Esophagus squamous epithelium (tissue), 5 donors: ENCODE measurements at regions of chr2 and their contacts with region 1.

Region 1: DNA sequence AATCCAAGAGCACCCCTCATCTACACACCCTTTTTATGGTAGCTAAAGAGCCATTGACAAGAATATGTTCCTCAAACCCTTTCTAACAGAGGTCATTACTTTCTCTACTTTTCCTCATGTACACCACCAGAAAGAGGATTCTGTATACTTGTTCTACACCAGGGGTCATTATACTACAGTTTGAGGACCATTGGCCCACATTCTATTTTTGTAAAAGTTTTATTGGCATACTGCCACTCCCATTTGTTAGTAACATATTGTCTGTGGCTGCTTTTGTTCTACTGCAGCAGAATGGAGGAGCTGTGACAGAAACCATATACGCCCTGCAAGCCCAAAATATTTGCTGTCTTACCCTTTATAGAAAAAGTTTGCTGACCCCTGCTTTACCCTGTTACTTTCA is 14.3 kb downstream of the HTR2B start:
- DNase-seq: no peak
- H3K4me3 ChIP-seq: no peak overlapping the region
- H3K27ac ChIP-seq: no peak overlapping the region
- H3K4me1 ChIP-seq: peaks cover 0 to 11% (median 0%) of the 10 kb centered on the region in 3 donors
- H3K27me3 ChIP-seq: no peaks in the 10 kb centered on the region
- CTCF ChIP-seq: peak in 1 of 6 experiments; percentile 16
- POLR2A ChIP-seq: no peak

Region 2: GRCh38 chr2:230814616-230815015 is 295.9 kb before region 1 on chr2:
- intact Hi-C with region 1: no loop called
- DNase-seq: no peak
- H3K4me3 ChIP-seq: no peak overlapping the region
- H3K27ac ChIP-seq: no peak overlapping the region
- H3K4me1 ChIP-seq: no peaks in the 10 kb centered on the region
- H3K27me3 ChIP-seq: no peaks in the 10 kb centered on the region
- CTCF ChIP-seq: peak in 2 of 6 experiments; percentile 7 to 34
- POLR2A ChIP-seq: no peak

Region 3: GRCh38 chr2:231000211-231000904 is 110.2 kb before region 1 on chr2:
- intact Hi-C with region 1: no loop called
- DNase-seq: no peak
- H3K4me3 ChIP-seq: no peak overlapping the region
- H3K27ac ChIP-seq: no peak overlapping the region
- H3K4me1 ChIP-seq: peaks cover 0 to 23% (median 0%) of the 10 kb centered on the region in 3 donors
- H3K27me3 ChIP-seq: peaks cover 0 to 87% (median 0%) of the 10 kb centered on the region in 4 donors
- CTCF ChIP-seq: no peak
- POLR2A ChIP-seq: no peak

Region 4: DNA sequence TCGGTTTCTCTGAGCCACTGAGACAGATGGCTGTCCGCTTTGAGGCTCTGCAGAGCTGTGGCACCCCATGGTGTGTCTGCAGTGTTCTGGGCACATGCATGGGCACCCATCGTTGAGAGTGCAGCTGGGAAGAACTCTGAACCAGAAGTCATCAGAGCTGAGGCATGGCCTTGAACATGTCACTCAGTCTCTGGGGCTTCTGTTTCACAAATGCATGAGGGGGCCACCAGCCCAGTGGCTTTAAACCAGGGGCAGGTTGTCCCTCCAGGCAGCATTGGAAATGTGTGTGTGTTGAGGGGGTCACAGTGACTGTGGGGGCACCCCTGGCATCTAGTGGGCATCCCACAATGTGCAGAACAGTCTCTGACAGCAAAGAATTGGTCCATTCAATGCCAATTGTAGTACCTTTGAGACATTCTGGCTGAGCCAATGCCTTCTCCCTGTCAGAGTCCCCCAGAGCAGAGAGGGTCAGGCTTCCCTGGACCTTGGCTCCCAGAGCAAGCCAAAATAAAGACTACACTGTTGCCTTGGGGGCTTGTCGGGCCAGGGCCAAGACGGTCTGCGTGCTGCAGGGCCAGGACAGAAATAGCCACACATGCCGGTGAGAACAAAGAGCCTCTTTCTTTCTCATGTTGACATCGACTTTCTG is 63.2 kb before region 1 on chr2:
- intact Hi-C with region 1: no loop called
- DNase-seq: no peak
- H3K4me3 ChIP-seq: no peak overlapping the region
- H3K27ac ChIP-seq: no peak overlapping the region
- H3K4me1 ChIP-seq: peaks cover 2 to 4% (median 3%) of the 10 kb centered on the region in 3 donors
- H3K27me3 ChIP-seq: peaks cover 0 to 29% (median 0%) of the 10 kb centered on the region in 4 donors
- CTCF ChIP-seq: no peak
- POLR2A ChIP-seq: no peak

Region 5: GRCh38 chr2:231057590-231057989 is 53.0 kb before region 1 on chr2:
- intact Hi-C with region 1: no loop called
- DNase-seq: no peak
- H3K4me3 ChIP-seq: peak overlapping the region; percentile 83 to 98 (median 95)
- H3K27ac ChIP-seq: peak overlapping the region in 3 of 4 donors; percentile 87 to 97 (median 95)
- H3K4me1 ChIP-seq: peaks cover 8 to 59% (median 30%) of the 10 kb centered on the region in 3 donors
- H3K27me3 ChIP-seq: no peaks in the 10 kb centered on the region
- CTCF ChIP-seq: no peak
- POLR2A ChIP-seq: no peak

Region 6: GRCh38 chr2:231191896-231192872 is 81.6 kb after region 1 on chr2:
- intact Hi-C with region 1: loop called (anchors 5 kb)
- DNase-seq: no peak
- H3K4me3 ChIP-seq: no peak overlapping the region
- H3K27ac ChIP-seq: peak overlapping the region; percentile 7 to 92 (median 82)
- H3K4me1 ChIP-seq: peaks cover 0 to 33% (median 15%) of the 10 kb centered on the region in 3 donors
- H3K27me3 ChIP-seq: peaks cover 0 to 37% (median 2%) of the 10 kb centered on the region in 4 donors
- CTCF ChIP-seq: peak in 4 of 6 experiments; percentile 20 to 49 (median 34)
- POLR2A ChIP-seq: no peak